ENCODE measurements at regions of chr7 and their contacts with region 1.

Region 1: GRCh38 chr7:33632840-33633525 is 272.4 kb upstream of the BMPER start:
- DNase-seq: no peak
- H3K4me3 ChIP-seq: no peak overlapping the region
- H3K27ac ChIP-seq: no peak overlapping the region
- H3K4me1 ChIP-seq: no peaks in the 10 kb centered on the region
- H3K27me3 ChIP-seq: no peaks in the 10 kb centered on the region
- CTCF ChIP-seq: no peak
- POLR2A ChIP-seq: no peak

Region 2: GRCh38 chr7:33781796-33782195 is 148.8 kb after region 1 on chr7:
- CTCF ChIA-PET with region 1: no interaction called
- POLR2A ChIA-PET with region 1: interaction called, 10 read pairs
- dilution Hi-C with region 1: no loop called
- intact Hi-C with region 1: no loop called
- DNase-seq: no peak
- H3K4me3 ChIP-seq: no peak overlapping the region
- H3K27ac ChIP-seq: no peak overlapping the region
- H3K4me1 ChIP-seq: no peaks in the 10 kb centered on the region
- H3K27me3 ChIP-seq: no peaks in the 10 kb centered on the region
- CTCF ChIP-seq: no peak
- POLR2A ChIP-seq: no peak